ENCODE measurements at regions of chr6 and their contacts with region 1.

Region 1: GRCh38 chr6:75526502-75527127 is 33.0 kb upstream of the FILIP1 start:
- DNase-seq: peak in 8 of 9 donors; percentile 30 to 65 (median 57)
- ATAC-seq: peak; percentile 91
- H3K4me3 ChIP-seq: no peak overlapping the region
- H3K4me3 Mint-ChIP-seq: no peak overlapping the region
- H3K27ac ChIP-seq: no peak overlapping the region
- H3K27ac Mint-ChIP-seq: no peak overlapping the region
- H3K4me1 ChIP-seq: no peaks in the 10 kb centered on the region
- H3K4me1 Mint-ChIP-seq: no peaks in the 10 kb centered on the region
- H3K27me3 ChIP-seq: peaks cover 0 to 3% of the 10 kb centered on the region in 2 donors
- H3K27me3 Mint-ChIP-seq: peaks cover 15 to 44% (median 27%) of the 10 kb centered on the region in 5 donors

Region 2: GRCh38 chr6:74091136-74091793 is 1435.3 kb before region 1 on chr6:
- CTCF ChIA-PET with region 1: no interaction called
- POLR2A ChIA-PET with region 1: no interaction called
- intact Hi-C with region 1: loop called in 1 of 2 experiments (anchors 5 kb)
- DNase-seq: peak in 4 of 9 donors; percentile 2 to 14 (median 4)
- ATAC-seq: no peak
- H3K4me3 ChIP-seq: no peak overlapping the region
- H3K4me3 Mint-ChIP-seq: no peak overlapping the region
- H3K27ac ChIP-seq: no peak overlapping the region
- H3K27ac Mint-ChIP-seq: no peak overlapping the region
- H3K4me1 ChIP-seq: no peaks in the 10 kb centered on the region
- H3K4me1 Mint-ChIP-seq: no peaks in the 10 kb centered on the region
- H3K27me3 ChIP-seq: peaks cover 0 to 4% of the 10 kb centered on the region in 2 donors
- H3K27me3 Mint-ChIP-seq: peaks cover 0 to 10% (median 5%) of the 10 kb centered on the region in 5 donors

Region 3: DNA sequence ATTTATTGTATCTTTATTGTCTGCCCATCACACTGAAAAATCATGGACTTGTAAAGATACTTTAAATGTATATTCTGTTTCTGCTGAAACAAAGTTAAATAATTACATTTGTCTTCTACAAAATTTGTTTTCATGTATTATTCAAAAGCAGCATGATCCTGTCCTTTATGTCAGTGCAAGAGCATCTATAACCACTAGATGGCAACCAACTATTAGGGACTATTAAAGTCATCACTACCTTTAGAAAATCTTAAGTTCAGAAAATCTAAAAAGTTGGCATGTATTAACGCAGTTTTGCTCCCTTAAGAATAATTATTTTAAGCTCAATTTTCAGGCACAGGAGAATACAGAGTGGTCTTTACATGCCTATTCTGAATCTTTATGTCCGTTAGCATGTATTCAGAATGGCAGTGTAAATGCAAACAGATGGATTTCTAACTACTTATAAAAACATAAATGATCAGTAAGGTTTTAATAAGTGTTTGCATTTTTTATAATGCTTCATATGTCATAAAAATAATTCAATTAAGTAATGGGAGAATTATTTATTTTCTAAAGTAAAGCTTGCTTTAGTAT is 259.8 kb before region 1 on chr6:
- CTCF ChIA-PET with region 1: interaction called, 3 read pairs
- POLR2A ChIA-PET with region 1: no interaction called
- intact Hi-C with region 1: loop called (anchors 1 kb)
- DNase-seq: peak in 7 of 9 donors; percentile 11 to 43 (median 27)
- ATAC-seq: peak; percentile 78
- H3K4me3 ChIP-seq: no peak overlapping the region
- H3K4me3 Mint-ChIP-seq: no peak overlapping the region
- H3K27ac ChIP-seq: no peak overlapping the region
- H3K27ac Mint-ChIP-seq: peak overlapping the region in 1 of 9 donors; percentile 32
- H3K4me1 ChIP-seq: peaks cover 0 to 5% of the 10 kb centered on the region in 2 donors
- H3K4me1 Mint-ChIP-seq: peaks cover 0 to 52% (median 41%) of the 10 kb centered on the region in 7 donors
- H3K27me3 ChIP-seq: no peaks in the 10 kb centered on the region
- H3K27me3 Mint-ChIP-seq: no peaks in the 10 kb centered on the region

Region 4: GRCh38 chr6:75368151-75368779 is 158.3 kb before region 1 on chr6:
- CTCF ChIA-PET with region 1: no interaction called
- POLR2A ChIA-PET with region 1: no interaction called
- intact Hi-C with region 1: loop called in 1 of 2 experiments (anchors 1 kb)
- DNase-seq: no peak
- ATAC-seq: no peak
- H3K4me3 ChIP-seq: no peak overlapping the region
- H3K4me3 Mint-ChIP-seq: no peak overlapping the region
- H3K27ac ChIP-seq: no peak overlapping the region
- H3K27ac Mint-ChIP-seq: no peak overlapping the region
- H3K4me1 ChIP-seq: no peaks in the 10 kb centered on the region
- H3K4me1 Mint-ChIP-seq: no peaks in the 10 kb centered on the region
- H3K27me3 ChIP-seq: no peaks in the 10 kb centered on the region
- H3K27me3 Mint-ChIP-seq: peaks cover 0 to 9% (median 4%) of the 10 kb centered on the region in 5 donors

Region 5: GRCh38 chr6:75550544-75551167 is 24.0 kb after region 1 on chr6:
- CTCF ChIA-PET with region 1: no interaction called
- POLR2A ChIA-PET with region 1: no interaction called
- intact Hi-C with region 1: no loop called
- DNase-seq: no peak
- ATAC-seq: no peak
- H3K4me3 ChIP-seq: no peak overlapping the region
- H3K4me3 Mint-ChIP-seq: no peak overlapping the region
- H3K27ac ChIP-seq: no peak overlapping the region
- H3K27ac Mint-ChIP-seq: no peak overlapping the region
- H3K4me1 ChIP-seq: no peaks in the 10 kb centered on the region
- H3K4me1 Mint-ChIP-seq: peaks cover 0 to 11% (median 0%) of the 10 kb centered on the region in 7 donors
- H3K27me3 ChIP-seq: no peaks in the 10 kb centered on the region
- H3K27me3 Mint-ChIP-seq: peaks cover 0 to 12% (median 0%) of the 10 kb centered on the region in 5 donors

Measured in naive thymus-derived CD4-positive, alpha-beta T cell (primary cell).